Activated T-helper 1 cell treated with anti-CD3 and anti-CD28 coated beads, Interleukin-12 subunit alpha, Interleukin-12 subunit beta, Interleukin-2, Interleukin-4 antibody, amounts not matched to agents 30 ng/mL and 10 ng/mL and 1 ng/mL, durations not matched to agents 14 hours and 24 hours and 36 hours (primary cell): ENCODE measurements at regions of chr1 and their contacts with region 1.

Region 1: GRCh38 chr1:38964140-38964548 is 22.5 kb upstream of the RHBDL2 start:
- DNase-seq: no peak
- H3K4me3 Mint-ChIP-seq: no peak overlapping the region
- H3K27ac Mint-ChIP-seq: no peak overlapping the region
- H3K4me1 Mint-ChIP-seq: no peaks in the 10 kb centered on the region
- H3K27me3 Mint-ChIP-seq: peaks cover 2% of the 10 kb centered on the region

Region 2: GRCh38 chr1:38102636-38103035 is 861.5 kb before region 1 on chr1:
- intact Hi-C with region 1: loop called (anchors 5 kb)
- DNase-seq: no peak
- H3K4me3 Mint-ChIP-seq: no peak overlapping the region
- H3K27ac Mint-ChIP-seq: no peak overlapping the region
- H3K4me1 Mint-ChIP-seq: no peaks in the 10 kb centered on the region
- H3K27me3 Mint-ChIP-seq: peaks cover 5% of the 10 kb centered on the region

Region 3: GRCh38 chr1:38848071-38848470 is 116.1 kb before region 1 on chr1:
- intact Hi-C with region 1: no loop called
- DNase-seq: no peak
- H3K4me3 Mint-ChIP-seq: no peak overlapping the region
- H3K27ac Mint-ChIP-seq: peak overlapping the region; percentile 55
- H3K4me1 Mint-ChIP-seq: peaks cover 13% of the 10 kb centered on the region
- H3K27me3 Mint-ChIP-seq: no peaks in the 10 kb centered on the region

Region 4: DNA sequence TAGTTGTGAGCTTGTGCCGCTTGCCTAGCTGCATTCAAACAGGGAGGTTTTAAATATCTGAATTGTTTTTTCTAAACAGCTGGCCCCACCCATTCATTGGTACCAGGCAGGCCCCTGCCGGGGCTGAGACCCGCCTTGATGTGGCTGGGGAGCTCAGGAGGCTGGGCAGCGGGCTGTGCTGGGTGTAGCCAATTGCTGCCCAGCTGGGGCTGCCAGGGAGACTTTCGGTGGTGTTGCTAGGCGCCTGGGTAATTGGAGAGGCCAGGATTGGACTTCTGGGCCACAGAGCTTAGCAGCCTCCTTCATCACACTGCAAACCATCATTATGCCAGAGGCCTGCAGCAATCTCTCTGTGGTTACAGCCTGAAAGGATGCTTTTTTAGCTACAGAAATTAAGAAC is 34.7 kb before region 1 on chr1:
- intact Hi-C with region 1: no loop called
- DNase-seq: no peak
- H3K4me3 Mint-ChIP-seq: no peak overlapping the region
- H3K27ac Mint-ChIP-seq: no peak overlapping the region
- H3K4me1 Mint-ChIP-seq: no peaks in the 10 kb centered on the region
- H3K27me3 Mint-ChIP-seq: no peaks in the 10 kb centered on the region